Esophagus muscularis mucosa (tissue), 4 donors: ENCODE measurements at regions of chr1 and their contacts with region 1.

Region 1: DNA sequence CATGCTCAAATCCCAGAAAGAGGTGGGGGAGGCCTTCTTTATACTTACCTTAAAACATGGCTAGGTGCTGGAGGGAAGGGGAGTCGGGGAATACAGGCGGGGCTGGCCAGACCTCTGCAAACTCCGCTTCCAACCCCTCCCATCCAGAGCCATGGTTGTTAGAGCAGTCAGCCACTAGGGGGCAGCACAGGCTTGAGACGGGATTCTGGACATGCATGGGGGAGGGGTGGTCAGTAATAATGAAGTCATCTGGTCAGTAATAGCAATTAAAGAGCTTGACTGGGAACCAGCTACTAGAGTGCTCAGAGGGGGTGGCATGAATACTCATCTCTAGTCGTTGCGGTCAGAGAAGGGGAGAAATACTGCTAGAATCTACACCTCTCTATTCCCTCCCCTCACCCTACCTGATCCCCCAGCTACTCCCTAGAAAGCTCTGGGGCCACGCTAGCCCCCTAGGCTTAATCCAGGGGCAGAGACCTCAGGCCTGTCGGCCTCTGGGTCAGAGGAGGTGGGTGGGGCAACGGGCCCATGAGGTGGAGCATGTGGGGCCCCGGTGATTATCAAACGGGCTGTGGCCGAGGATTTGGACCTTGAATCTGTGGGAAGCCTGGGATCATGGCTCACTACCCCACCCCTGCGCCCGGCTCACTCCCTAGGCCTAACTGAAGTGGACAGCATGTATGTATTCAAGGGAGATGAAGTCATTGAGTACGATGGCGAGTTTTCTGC is 2.9 kb downstream of the CASQ1 start:
- DNase-seq: peak; percentile 96
- H3K4me3 ChIP-seq: peak overlapping the region in 2 of 4 donors; percentile 15 to 36
- H3K27ac ChIP-seq: peak overlapping the region in 3 of 4 donors; percentile 21 to 49 (median 45)
- H3K4me1 ChIP-seq: peaks cover 30 to 48% (median 43%) of the 10 kb centered on the region in 4 donors
- H3K27me3 ChIP-seq: no peaks in the 10 kb centered on the region
- CTCF ChIP-seq: peak; percentile 95 to 98 (median 97)
- EP300 ChIP-seq: no peak
- POLR2A ChIP-seq: no peak

Region 2: DNA sequence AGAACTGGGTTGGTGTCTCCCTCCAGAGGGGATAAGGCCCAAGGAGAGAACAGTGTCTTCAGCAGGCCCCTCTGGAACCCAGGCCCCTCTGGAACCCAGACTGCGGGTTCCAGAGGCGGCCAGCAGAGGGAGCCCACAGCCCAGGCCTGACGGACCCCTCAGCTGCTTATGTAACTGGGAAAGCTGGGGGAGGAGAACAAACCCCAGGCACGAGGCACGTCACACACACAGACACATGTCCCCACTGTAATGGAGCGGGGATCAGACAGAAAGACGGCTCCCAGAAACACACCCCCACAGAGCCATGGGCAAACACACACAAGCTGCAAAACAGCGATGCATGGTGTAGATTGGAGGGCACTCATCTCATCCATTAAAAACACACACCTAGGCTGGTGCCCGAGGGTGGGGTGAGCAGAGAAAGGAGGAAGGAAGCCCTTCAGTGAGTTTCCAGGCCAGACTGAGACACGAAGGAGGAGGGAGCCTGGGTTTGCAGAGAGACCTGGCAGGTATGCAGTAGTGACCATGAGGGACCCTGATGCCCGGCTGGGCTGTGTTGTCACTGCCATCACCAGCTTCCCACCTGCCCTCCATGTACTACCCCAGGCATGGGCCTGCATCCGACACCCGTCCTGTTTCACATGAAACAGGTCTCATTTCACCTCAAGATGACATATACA is 92.1 kb before region 1 on chr1:
- intact Hi-C with region 1: loop called (anchors 2 kb)
- DNase-seq: no peak
- H3K4me3 ChIP-seq: peak overlapping the region in 1 of 4 donors; percentile 9
- H3K27ac ChIP-seq: peak overlapping the region; percentile 94 to 98 (median 96)
- H3K4me1 ChIP-seq: peaks cover 52 to 76% (median 71%) of the 10 kb centered on the region in 4 donors
- H3K27me3 ChIP-seq: no peaks in the 10 kb centered on the region
- CTCF ChIP-seq: peak in 2 of 3 experiments; percentile 97 to 100
- EP300 ChIP-seq: no peak
- POLR2A ChIP-seq: no peak

Region 3: DNA sequence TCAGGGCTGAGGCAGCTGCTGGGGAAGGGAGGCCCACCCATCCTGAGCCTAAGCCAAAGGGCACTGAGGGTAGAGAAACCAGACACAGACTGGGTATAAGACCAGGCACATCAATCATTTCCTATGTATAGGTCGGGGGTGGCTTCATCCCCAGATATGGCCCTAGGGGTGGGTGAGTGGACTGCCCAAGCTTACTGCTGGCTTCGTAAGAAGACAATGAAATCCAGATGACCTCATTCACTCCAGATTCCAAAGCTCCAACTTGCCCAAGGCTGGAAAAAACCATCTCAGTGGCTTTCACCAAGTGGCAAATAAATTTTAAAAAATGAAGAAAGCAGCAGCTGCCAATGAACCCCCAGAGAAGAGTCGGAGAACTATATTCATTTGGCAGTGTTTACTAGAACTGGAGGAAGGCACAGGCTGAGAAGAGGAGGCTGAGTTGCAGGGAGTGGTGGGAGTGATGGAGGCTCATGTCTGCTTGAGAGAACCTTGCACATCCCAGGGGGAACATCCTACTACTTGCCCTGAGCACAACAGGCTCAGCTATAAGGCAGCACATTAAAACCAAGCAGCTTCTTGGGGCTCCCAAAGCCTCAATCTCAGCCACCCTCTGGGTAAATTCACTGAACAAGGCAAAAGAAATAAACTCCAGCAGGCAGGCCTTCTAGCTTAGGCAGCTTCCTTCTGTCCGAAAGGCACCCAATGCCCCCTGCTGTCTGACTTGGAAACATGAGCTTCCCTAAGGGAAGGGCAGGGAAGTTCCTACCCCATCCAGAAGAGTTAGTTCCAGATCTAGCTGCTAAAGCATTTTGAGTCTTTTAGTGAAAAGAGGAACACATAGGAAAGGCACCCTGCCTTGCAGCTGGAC is 26.0 kb after region 1 on chr1:
- intact Hi-C with region 1: loop called (anchors 2 kb)
- DNase-seq: no peak
- H3K4me3 ChIP-seq: no peak overlapping the region
- H3K27ac ChIP-seq: peak overlapping the region; percentile 60 to 79 (median 76)
- H3K4me1 ChIP-seq: peaks cover 35 to 54% (median 45%) of the 10 kb centered on the region in 4 donors
- H3K27me3 ChIP-seq: no peaks in the 10 kb centered on the region
- CTCF ChIP-seq: peak; percentile 64 to 76 (median 74)
- EP300 ChIP-seq: no peak
- POLR2A ChIP-seq: no peak

Region 4: GRCh38 chr1:160291248-160292220 is 98.3 kb after region 1 on chr1:
- intact Hi-C with region 1: loop called (anchors 2 kb)
- DNase-seq: peak; percentile 93
- H3K4me3 ChIP-seq: no peak overlapping the region
- H3K27ac ChIP-seq: no peak overlapping the region
- H3K4me1 ChIP-seq: peaks cover 0 to 7% (median 2%) of the 10 kb centered on the region in 4 donors
- H3K27me3 ChIP-seq: no peaks in the 10 kb centered on the region
- CTCF ChIP-seq: peak; percentile 81 to 87 (median 82)
- EP300 ChIP-seq: no peak
- POLR2A ChIP-seq: no peak